Naive thymus-derived CD4-positive, alpha-beta T cell (primary cell): ENCODE measurements at regions of chr15 and their contacts with region 1.

Region 1: GRCh38 chr15:55407949-55408791 is at the starts of genes CCPG1 and PIERCE2:
- DNase-seq: peak; percentile 80 to 89 (median 85)
- ATAC-seq: peak; percentile 95
- H3K4me3 ChIP-seq: peak within 1 kb of the TSS; percentile 70
- H3K4me3 Mint-ChIP-seq: peak within 1 kb of the TSS; percentile 88 to 97 (median 94)
- H3K27ac ChIP-seq: peak within 1 kb of the TSS; percentile 86
- H3K27ac Mint-ChIP-seq: peak within 1 kb of the TSS; percentile 82 to 97 (median 89)
- H3K4me1 ChIP-seq: peaks cover 12 to 20% of the 10 kb centered on the region in 2 donors
- H3K4me1 Mint-ChIP-seq: peaks cover 18 to 52% (median 37%) of the 10 kb centered on the region in 7 donors
- H3K27me3 ChIP-seq: no peaks in the 10 kb centered on the region
- H3K27me3 Mint-ChIP-seq: peaks cover 0 to 2% (median 0%) of the 10 kb centered on the region in 5 donors
- total RNA-seq, gene CCPG1: 17.9 to 40.9 (median 28.4) TPM
- total RNA-seq, gene PIERCE2: 0.42 TPM in 1 of 5 experiments, not detected in the others

Region 2: DNA sequence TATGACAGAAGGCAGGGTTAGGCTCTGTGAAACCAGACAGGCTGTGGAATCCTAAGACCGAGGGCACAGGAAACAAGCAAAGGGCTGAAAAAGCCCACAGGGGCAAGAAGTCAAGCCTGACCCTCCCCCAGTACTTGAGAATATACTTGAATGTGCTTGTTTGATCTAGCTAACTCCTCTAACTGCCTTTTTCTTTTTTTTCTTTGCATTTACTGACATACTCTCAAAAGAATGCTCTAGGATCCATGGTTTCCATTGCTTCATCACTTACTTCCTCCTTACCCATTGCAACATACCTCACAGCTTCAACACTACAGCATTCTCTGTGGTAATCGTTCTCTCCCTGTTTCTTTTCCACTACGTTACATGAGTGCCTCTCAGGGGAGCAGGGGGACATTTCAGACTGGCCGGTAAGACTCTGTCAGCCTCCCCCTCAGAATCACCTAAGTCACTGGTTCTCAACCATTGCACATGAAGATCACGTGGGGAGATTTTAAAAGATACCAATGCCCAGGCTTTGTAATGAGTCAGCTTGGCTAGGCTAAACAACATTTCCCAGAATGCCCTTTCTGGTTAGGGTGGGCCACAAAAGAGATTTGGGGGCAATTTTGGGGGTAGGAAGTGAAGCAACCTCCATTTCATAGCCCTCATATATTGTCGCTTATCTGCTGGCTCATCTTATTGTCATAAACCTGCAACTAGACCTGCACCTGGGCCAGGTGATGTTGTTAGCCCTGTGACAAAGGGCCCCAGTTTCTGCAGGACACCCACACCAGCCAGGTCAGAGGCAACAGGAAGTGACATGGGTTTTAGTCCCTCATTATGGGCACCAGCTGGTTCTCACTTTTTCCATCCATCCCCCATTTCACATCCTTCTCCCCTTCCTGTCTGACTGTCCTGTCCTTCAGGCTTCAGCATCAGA is 186.8 kb before region 1 on chr15:
- CTCF ChIA-PET with region 1: no interaction called
- POLR2A ChIA-PET with region 1: no interaction called
- intact Hi-C with region 1: loop called in 1 of 2 experiments (anchors 1 kb)
- DNase-seq: peak in 1 of 9 donors; percentile 26
- ATAC-seq: peak; percentile 48
- H3K4me3 ChIP-seq: no peak overlapping the region
- H3K4me3 Mint-ChIP-seq: peak overlapping the region in 5 of 10 donors; percentile 17 to 69 (median 38)
- H3K27ac ChIP-seq: no peak overlapping the region
- H3K27ac Mint-ChIP-seq: peak overlapping the region in 5 of 9 donors; percentile 11 to 87 (median 38)
- H3K4me1 ChIP-seq: peaks cover 43 to 54% of the 10 kb centered on the region in 2 donors
- H3K4me1 Mint-ChIP-seq: peaks cover 44 to 71% (median 51%) of the 10 kb centered on the region in 7 donors
- H3K27me3 ChIP-seq: no peaks in the 10 kb centered on the region
- H3K27me3 Mint-ChIP-seq: no peaks in the 10 kb centered on the region

Region 3: GRCh38 chr15:55372701-55373440 is 35.3 kb before region 1 on chr15:
- CTCF ChIA-PET with region 1: no interaction called
- POLR2A ChIA-PET with region 1: interaction called, 6 read pairs
- intact Hi-C with region 1: loop called in 1 of 2 experiments (anchors 5 kb)
- DNase-seq: no peak
- ATAC-seq: no peak
- H3K4me3 ChIP-seq: no peak overlapping the region
- H3K4me3 Mint-ChIP-seq: no peak overlapping the region
- H3K27ac ChIP-seq: no peak overlapping the region
- H3K27ac Mint-ChIP-seq: peak overlapping the region in 3 of 9 donors; percentile 0 to 9 (median 6)
- H3K4me1 ChIP-seq: no peaks in the 10 kb centered on the region
- H3K4me1 Mint-ChIP-seq: peaks cover 0 to 15% (median 0%) of the 10 kb centered on the region in 7 donors
- H3K27me3 ChIP-seq: no peaks in the 10 kb centered on the region
- H3K27me3 Mint-ChIP-seq: no peaks in the 10 kb centered on the region

Region 4: GRCh38 chr15:55434989-55435825 is 27.0 kb after region 1 on chr15:
- CTCF ChIA-PET with region 1: interaction called, 18 read pairs
- POLR2A ChIA-PET with region 1: no interaction called
- intact Hi-C with region 1: loop called (anchors 1 kb)
- DNase-seq: peak in 5 of 9 donors; percentile 30 to 43 (median 33)
- ATAC-seq: peak; percentile 68
- H3K4me3 ChIP-seq: no peak overlapping the region
- H3K4me3 Mint-ChIP-seq: no peak overlapping the region
- H3K27ac ChIP-seq: no peak overlapping the region
- H3K27ac Mint-ChIP-seq: no peak overlapping the region
- H3K4me1 ChIP-seq: no peaks in the 10 kb centered on the region
- H3K4me1 Mint-ChIP-seq: peaks cover 0 to 10% (median 5%) of the 10 kb centered on the region in 7 donors
- H3K27me3 ChIP-seq: no peaks in the 10 kb centered on the region
- H3K27me3 Mint-ChIP-seq: peaks cover 0 to 4% (median 0%) of the 10 kb centered on the region in 5 donors

Region 5: DNA sequence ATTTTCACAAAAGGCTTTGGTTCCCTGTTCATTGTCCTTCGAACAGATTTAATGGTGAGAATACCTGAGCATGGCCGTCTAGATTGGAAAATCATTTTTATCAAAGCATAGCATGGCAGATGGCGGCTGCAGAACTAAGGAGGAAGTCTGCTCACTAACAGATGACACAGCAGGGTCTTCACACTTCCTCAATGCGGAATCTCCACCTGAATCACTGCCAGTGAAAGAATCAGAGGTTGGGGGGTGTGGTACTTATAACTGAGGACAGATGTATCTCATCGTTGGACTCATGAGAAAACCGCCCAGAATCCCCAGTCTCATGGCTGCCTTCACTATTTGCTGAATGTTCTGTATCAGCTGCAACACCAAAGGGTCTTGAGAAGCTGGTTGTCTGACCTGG is 211.6 kb after region 1 on chr15:
- CTCF ChIA-PET with region 1: no interaction called
- POLR2A ChIA-PET with region 1: no interaction called
- intact Hi-C with region 1: no loop called
- DNase-seq: no peak
- ATAC-seq: no peak
- H3K4me3 ChIP-seq: no peak overlapping the region
- H3K4me3 Mint-ChIP-seq: no peak overlapping the region
- H3K27ac ChIP-seq: no peak overlapping the region
- H3K27ac Mint-ChIP-seq: no peak overlapping the region
- H3K4me1 ChIP-seq: no peaks in the 10 kb centered on the region
- H3K4me1 Mint-ChIP-seq: no peaks in the 10 kb centered on the region
- H3K27me3 ChIP-seq: no peaks in the 10 kb centered on the region
- H3K27me3 Mint-ChIP-seq: peaks cover 21 to 28% (median 26%) of the 10 kb centered on the region in 5 donors

Region 6: GRCh38 chr15:56040081-56041035 is 632.2 kb after region 1 on chr15:
- CTCF ChIA-PET with region 1: no interaction called
- POLR2A ChIA-PET with region 1: no interaction called
- intact Hi-C with region 1: loop called in 1 of 2 experiments (anchors 1 kb)
- DNase-seq: no peak
- ATAC-seq: no peak
- H3K4me3 ChIP-seq: no peak overlapping the region
- H3K4me3 Mint-ChIP-seq: no peak overlapping the region
- H3K27ac ChIP-seq: no peak overlapping the region
- H3K27ac Mint-ChIP-seq: peak overlapping the region in 1 of 9 donors; percentile 26
- H3K4me1 ChIP-seq: peaks cover 20 to 24% of the 10 kb centered on the region in 2 donors
- H3K4me1 Mint-ChIP-seq: peaks cover 8 to 62% (median 46%) of the 10 kb centered on the region in 7 donors
- H3K27me3 ChIP-seq: no peaks in the 10 kb centered on the region
- H3K27me3 Mint-ChIP-seq: peaks cover 0 to 2% (median 0%) of the 10 kb centered on the region in 5 donors